Caco-2 (cell line): ENCODE measurements at regions of chr12 and their contacts with region 1.

Region 1: DNA sequence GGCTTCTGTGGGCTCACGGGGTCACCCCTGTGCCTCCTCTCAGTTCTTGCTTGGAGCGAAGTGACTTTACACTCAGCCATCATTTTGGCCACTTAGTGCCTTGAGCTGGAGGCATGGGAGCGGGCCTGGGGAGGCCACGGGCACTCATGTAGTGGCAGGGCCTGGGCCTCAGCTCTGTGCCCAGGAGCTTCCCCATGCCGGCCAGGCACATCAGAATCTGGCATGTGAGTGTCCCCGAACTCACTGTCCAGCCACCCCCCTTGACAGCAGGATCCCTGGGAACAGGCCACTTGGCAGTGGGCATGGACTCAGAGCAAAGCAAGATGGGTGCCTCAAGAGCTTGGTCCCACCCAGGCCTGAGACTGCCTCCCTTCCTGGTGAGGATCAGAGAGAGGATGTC is 29.5 kb downstream of the DDX51 start:
- DNase-seq: no peak
- H3K4me3 ChIP-seq: no peak overlapping the region
- H3K4me3 Mint-ChIP-seq: no peak overlapping the region
- H3K27ac Mint-ChIP-seq: no peak overlapping the region
- H3K4me1 ChIP-seq: no peaks in the 10 kb centered on the region
- H3K4me1 Mint-ChIP-seq: no peaks in the 10 kb centered on the region
- H3K27me3 ChIP-seq: no peaks in the 10 kb centered on the region
- H3K27me3 Mint-ChIP-seq: no peaks in the 10 kb centered on the region
- CTCF ChIP-seq: no peak

Region 2: GRCh38 chr12:132095520-132096384 is 18.9 kb before region 1 on chr12:
- CTCF ChIA-PET with region 1: no interaction called
- POLR2A ChIA-PET with region 1: no interaction called
- intact Hi-C with region 1: loop called (anchors 1 kb)
- DNase-seq: no peak
- H3K4me3 ChIP-seq: no peak overlapping the region
- H3K4me3 Mint-ChIP-seq: no peak overlapping the region
- H3K27ac Mint-ChIP-seq: peak overlapping the region; percentile 6
- H3K4me1 ChIP-seq: no peaks in the 10 kb centered on the region
- H3K4me1 Mint-ChIP-seq: peaks cover 7% of the 10 kb centered on the region
- H3K27me3 ChIP-seq: no peaks in the 10 kb centered on the region
- H3K27me3 Mint-ChIP-seq: no peaks in the 10 kb centered on the region
- CTCF ChIP-seq: no peak

Region 3: DNA sequence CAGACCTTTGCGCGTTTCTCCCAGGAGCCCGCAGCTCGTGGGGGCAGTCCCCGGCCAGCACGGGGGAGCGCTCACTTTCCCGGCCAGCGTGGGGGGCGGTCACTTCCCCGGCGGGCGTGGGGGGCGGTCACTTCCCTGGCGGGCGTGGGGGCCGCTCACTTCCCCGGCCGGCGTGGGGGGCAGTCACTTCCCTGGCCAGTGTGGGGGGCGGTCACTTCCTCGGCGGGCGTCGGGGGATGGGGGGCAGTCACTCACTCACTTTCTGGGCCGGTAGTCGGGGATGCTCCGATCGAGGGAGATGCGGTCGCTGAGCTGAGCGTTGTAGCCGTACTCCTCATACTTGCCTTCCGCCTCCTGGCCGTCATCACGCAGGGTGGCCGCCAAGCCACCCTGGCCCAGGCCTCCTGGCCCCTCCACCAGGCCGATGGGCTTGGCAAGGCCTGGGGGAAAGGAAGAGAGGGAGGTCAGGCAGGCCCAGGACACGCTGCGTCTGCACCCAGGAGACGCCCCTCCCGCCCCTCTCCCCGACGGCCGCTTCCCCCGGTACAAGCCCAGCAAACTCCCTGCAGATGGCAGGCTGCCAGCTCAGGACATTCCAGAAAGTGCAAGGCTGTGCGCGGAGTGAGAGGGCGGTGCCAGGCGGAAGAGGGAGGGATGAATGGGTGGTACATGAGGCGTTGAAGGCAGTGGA is 171.5 kb after region 1 on chr12:
- CTCF ChIA-PET with region 1: no interaction called
- POLR2A ChIA-PET with region 1: no interaction called
- intact Hi-C with region 1: no loop called
- DNase-seq: no peak
- H3K4me3 ChIP-seq: no peak overlapping the region
- H3K4me3 Mint-ChIP-seq: no peak overlapping the region
- H3K27ac Mint-ChIP-seq: no peak overlapping the region
- H3K4me1 ChIP-seq: no peaks in the 10 kb centered on the region
- H3K4me1 Mint-ChIP-seq: no peaks in the 10 kb centered on the region
- H3K27me3 ChIP-seq: no peaks in the 10 kb centered on the region
- H3K27me3 Mint-ChIP-seq: peaks cover 4% of the 10 kb centered on the region
- CTCF ChIP-seq: no peak